Heart right ventricle (tissue), 16 donors: ENCODE measurements at regions of chr12 and their contacts with region 1.

Region 1: DNA sequence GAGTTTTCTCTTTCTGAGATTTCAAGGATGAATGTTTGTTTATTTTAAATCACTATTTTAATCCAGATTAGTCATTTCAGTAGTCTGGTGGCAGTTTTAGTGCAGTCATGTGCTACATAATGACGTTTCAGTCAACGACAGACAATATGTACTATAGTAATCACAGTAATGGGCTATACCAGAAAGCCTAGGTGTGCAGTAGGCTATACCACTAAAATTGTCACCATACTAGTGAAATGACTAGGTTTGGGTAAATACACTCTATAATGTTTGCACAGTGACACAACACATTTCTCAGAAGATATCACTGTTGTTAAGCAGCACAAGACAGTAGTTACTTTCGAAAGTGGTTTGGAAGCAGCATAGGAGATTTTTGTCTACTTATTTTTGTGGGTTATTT is 203.1 kb downstream of the ETNK1 start:
- DNase-seq: no peak
- ATAC-seq: no peak
- H3K4me3 ChIP-seq: no peak overlapping the region
- H3K27ac ChIP-seq: no peak overlapping the region
- H3K4me1 ChIP-seq: no peaks in the 10 kb centered on the region
- H3K27me3 ChIP-seq: no peaks in the 10 kb centered on the region
- CTCF ChIP-seq: no peak

Region 2: DNA sequence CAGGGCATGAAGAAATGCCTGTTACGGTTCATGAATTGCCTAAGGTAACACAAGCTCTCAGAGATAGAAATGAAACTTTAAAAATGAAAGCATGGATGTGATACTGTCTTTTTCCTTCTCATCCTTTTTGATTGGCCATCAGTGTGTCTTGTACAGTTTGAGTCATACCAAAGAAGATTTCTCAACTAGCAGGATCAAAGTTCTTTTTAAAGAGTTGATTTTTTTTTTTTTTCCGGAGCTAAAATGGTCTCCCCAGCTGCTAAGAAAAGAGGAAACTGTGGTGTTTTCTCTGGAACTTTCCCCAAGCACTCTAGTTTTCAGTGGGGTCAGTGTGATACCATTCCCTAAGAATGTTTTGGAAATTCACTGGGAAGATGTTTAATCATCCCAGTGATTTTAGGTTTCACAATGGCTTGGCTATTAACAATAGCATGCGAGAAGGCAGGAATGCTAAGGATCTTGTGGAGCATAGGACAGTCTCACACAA is 98.1 kb before region 1 on chr12:
- intact Hi-C with region 1: loop called in 1 of 10 experiments (anchors 10 kb)
- DNase-seq: peak in 1 of 2 donors; percentile 9
- ATAC-seq: peak in 7 of 8 donors; percentile 61 to 85 (median 82)
- H3K4me3 ChIP-seq: no peak overlapping the region
- H3K27ac ChIP-seq: peak overlapping the region in 8 of 10 donors; percentile 4 to 75 (median 37)
- H3K4me1 ChIP-seq: peaks cover 0 to 21% (median 7%) of the 10 kb centered on the region in 9 donors
- H3K27me3 ChIP-seq: no peaks in the 10 kb centered on the region
- CTCF ChIP-seq: no peak

Region 3: GRCh38 chr12:22787557-22787956 is 40.5 kb before region 1 on chr12:
- intact Hi-C with region 1: no loop called
- DNase-seq: no peak
- ATAC-seq: peak in 2 of 8 donors; percentile 45 to 58
- H3K4me3 ChIP-seq: no peak overlapping the region
- H3K27ac ChIP-seq: no peak overlapping the region
- H3K4me1 ChIP-seq: no peaks in the 10 kb centered on the region
- H3K27me3 ChIP-seq: no peaks in the 10 kb centered on the region
- CTCF ChIP-seq: no peak